ENCODE measurements at regions of chr17 and their contacts with region 1.

Region 1: GRCh38 chr17:15341385-15341849 is at the start of gene TEKT3:
- DNase-seq: peak; percentile 89
- total RNA-seq, gene TEKT3: 0.86 TPM

Region 2: DNA sequence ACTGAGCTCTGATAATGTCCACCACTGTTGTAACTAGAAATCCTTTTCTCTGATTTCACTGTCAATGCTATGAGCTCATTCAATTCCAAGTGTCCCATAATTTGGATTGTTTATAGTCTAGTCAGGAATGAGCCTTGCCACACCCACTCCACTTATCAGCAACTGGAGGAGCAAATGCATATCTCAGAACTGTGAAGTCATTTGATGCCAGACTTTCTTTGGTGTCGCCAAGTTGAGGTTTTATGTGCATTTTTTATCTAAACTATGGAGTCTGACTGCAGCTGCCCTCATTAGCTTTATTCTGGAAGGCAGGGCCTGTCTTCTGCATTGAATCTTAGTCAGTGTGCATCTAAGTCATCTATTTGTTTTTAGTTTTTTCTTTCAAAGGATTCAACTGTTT is 437.6 kb before region 1 on chr17:
- intact Hi-C with region 1: no loop called
- DNase-seq: no peak

Region 3: DNA sequence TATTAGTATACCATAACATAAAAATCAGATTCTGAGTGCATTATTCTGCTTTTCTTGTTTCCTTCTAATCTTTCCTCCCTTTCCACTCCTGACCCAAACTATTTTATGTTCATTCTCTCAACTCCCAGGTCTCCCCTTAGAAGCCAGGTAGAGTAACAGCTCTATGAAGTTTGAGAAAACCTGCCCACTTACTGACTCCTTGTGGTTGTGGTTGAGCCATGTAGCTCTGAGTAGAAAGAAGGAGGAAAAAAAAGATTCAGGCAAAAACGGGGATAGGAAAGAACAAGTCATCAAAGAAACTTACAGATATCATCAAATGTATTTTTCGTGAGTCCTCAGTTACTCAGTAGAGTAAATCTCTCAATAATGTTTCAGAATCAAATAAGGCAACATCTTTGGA is 293.0 kb before region 1 on chr17:
- intact Hi-C with region 1: no loop called
- DNase-seq: no peak

Region 4: GRCh38 chr17:15289285-15290185 is 51.9 kb before region 1 on chr17:
- intact Hi-C with region 1: no loop called
- DNase-seq: no peak

Region 5: GRCh38 chr17:15398291-15398690 is 56.9 kb after region 1 on chr17:
- intact Hi-C with region 1: no loop called
- DNase-seq: no peak

Region 6: GRCh38 chr17:15444805-15445204 is 103.4 kb after region 1 on chr17:
- intact Hi-C with region 1: loop called (anchors 5 kb)
- DNase-seq: no peak